GM12878 (cell line): ENCODE measurements at regions of chr2 and their contacts with region 1.

Region 1: DNA sequence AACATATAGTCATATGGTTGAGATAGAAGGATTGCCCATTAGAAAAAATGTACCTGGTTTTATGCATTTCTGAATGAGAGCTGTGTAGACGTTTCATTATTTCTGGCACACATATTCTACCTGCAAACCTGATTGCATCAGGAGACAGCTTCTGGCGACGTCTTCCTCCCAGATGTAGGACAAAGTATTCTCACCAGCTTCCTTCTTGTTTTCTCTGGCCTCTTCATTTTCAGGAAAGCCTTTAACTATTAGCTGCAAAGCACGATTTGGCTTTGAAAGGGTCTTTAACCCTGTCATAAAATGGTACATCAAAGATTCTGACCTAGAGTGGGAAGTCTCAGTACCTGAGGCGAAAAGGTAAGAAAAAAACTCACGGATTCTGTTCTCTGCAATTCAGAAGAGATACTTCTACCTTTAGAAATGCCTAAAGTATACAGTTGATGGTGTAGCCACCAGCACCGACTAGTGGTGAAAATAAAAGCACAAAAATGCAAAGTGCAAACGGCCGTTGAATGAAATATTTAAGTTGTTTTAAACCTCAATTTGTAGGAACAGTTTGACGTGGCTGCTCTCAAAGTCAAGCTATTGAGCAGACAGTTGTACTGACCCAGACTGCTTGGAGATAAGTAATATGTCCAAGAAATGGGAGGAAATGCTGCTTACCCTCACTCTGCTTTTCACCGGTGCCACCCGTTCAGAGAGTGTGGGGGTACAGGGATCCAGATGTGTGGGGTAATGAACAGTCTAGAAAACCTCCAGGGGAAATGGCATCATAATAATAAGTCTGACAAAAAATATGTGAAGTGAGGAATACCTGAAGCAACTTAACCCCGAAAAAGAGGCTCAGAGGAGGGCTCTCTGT is 20.2 kb downstream of the IL18RAP start:
- DNase-seq: no peak
- ATAC-seq: peak; percentile 93
- H3K4me3 ChIP-seq: no peak overlapping the region
- H3K27ac ChIP-seq: no peak overlapping the region
- H3K4me1 ChIP-seq: 0 out of 2 replicates have a peak, but pooled peaks cover 3% of the 10 kb centered on the region
- H3K27me3 ChIP-seq: no peaks in the 10 kb centered on the region
- CTCF ChIP-seq: peak; percentile 70 to 88 (median 86)
- EP300 ChIP-seq: no peak
- POLR2A ChIP-seq: no peak
- RAD21 ChIP-seq: peak; percentile 96

Region 2: DNA sequence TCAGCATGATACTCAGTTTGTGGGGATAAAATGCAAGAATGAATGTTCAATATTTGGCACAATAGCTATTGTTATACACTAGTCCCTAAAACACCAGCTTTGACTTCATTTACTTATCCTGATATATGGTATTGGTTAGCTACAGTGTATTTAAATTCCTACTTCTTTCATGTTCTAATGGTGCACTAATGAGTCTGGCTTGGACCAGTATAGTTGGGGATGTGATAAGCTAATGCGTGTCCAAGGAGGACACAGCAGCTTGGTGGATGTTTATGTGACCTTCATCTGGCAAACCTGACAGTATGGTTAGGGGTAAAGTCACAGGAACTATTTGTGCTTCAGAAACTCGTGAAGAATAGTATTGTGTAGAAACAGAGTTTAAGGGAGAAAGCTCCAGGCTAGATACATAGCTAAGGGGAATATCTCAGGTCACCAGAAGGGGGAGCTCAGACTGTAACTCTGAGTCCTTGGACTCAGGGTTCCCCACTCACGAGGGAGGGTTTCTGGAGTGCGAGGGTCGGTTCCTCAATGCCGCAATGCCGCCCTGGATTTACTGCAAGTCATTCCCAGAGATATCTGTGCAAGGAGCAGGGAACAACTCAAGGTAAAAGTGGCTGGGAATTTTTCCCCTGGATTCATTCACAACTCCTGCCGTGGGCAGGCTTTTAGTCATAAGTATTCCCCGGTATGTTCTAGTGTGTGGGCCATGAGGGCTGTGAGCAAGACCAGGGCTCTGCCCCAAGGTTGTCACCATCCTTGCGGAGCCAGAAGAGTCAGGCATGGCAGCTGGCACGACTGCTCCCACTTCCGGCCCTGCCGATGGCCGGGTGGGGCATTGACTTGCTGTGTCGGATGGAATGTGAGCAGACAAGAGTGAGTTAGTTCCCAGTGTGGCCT is 437.0 kb before region 1 on chr2:
- CTCF ChIA-PET with region 1: interaction called, 5 read pairs
- POLR2A ChIA-PET with region 1: no interaction called
- RAD21 ChIA-PET with region 1: interaction called, 10 read pairs
- SMC1A ChIA-PET with region 1: interaction called, 13 read pairs
- in situ Hi-C with region 1: no loop called
- intact Hi-C with region 1: loop called (anchors 5 kb)
- DNase-seq: no peak
- ATAC-seq: peak; percentile 82
- H3K4me3 ChIP-seq: no peak overlapping the region
- H3K27ac ChIP-seq: no peak overlapping the region
- H3K4me1 ChIP-seq: peaks cover 3% of the 10 kb centered on the region; the same call in 1 of the 2 replicates
- H3K27me3 ChIP-seq: no peaks in the 10 kb centered on the region; a peak in 1 of 4 replicates
- CTCF ChIP-seq: peak; percentile 63 to 73 (median 69)
- EP300 ChIP-seq: no peak
- POLR2A ChIP-seq: no peak
- RAD21 ChIP-seq: peak; percentile 51

Region 3: DNA sequence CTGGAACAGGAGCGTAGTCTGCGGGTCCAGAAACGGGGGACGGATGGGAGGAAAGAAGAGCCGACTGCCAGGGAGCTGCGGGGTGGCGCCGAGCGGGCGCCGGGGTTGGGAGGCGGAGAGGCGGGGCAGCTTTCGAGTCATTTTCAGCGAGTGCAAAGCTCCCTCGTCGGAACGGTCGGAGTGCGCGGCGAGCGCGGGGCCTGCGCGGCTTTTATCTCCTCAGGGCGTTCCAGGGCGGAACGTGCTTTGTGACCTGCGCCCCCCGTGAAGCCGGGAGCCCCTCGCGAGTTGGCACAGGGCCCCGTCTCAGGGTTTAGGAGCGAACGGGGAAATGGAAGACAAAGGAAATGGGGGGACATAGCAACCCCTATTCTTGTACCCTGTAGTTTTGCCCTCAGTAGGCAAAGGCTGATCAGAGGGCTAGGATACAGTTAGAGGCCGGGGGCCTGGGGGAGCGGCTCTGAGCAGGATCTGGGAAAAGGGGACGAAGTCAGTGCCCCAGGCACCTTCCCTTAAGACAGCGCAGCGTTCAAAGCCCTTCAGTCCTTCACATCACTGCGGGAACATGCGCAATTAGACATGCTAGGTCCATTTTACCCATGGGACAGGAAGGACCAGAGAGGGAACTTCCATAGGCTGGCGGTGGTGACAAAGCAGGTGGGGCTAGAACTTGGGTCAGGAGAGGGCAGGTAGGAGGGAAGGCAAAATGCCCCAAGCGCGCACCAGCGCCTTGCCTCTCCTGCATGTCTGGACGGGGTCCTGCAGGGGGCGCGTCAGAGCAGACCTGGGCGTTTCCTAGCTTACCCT is 192.0 kb before region 1 on chr2:
- CTCF ChIA-PET with region 1: interaction called, 83 read pairs
- POLR2A ChIA-PET with region 1: no interaction called
- RAD21 ChIA-PET with region 1: interaction called, 5 read pairs
- SMC1A ChIA-PET with region 1: interaction called, 17 read pairs
- in situ Hi-C with region 1: loop called (anchors 5 kb)
- intact Hi-C with region 1: no loop called
- DNase-seq: no peak
- ATAC-seq: peak; percentile 80
- H3K4me3 ChIP-seq: no peak overlapping the region
- H3K27ac ChIP-seq: no peak overlapping the region
- H3K4me1 ChIP-seq: no peaks in the 10 kb centered on the region
- H3K27me3 ChIP-seq: no peaks in the 10 kb centered on the region; a peak in 1 of 4 replicates
- CTCF ChIP-seq: peak; percentile 58 to 63 (median 60)
- EP300 ChIP-seq: no peak
- POLR2A ChIP-seq: no peak
- RAD21 ChIP-seq: 0 out of 2 replicates have a peak, but pooled peaks have one; percentile 25

Region 4: GRCh38 chr2:102355526-102356380 is 87.4 kb before region 1 on chr2 and contains the start of gene IL18R1:
- CTCF ChIA-PET with region 1: interaction called, 58 read pairs
- POLR2A ChIA-PET with region 1: interaction called, 3 read pairs
- RAD21 ChIA-PET with region 1: interaction called, 7 read pairs
- SMC1A ChIA-PET with region 1: interaction called, 42 read pairs
- in situ Hi-C with region 1: no loop called
- intact Hi-C with region 1: loop called (anchors 2 kb)
- DNase-seq: peak; percentile 42
- ATAC-seq: peak; percentile 88
- H3K4me3 ChIP-seq: peak within 1 kb of the TSS; percentile 96
- H3K27ac ChIP-seq: peak within 1 kb of the TSS; percentile 91
- H3K4me1 ChIP-seq: peaks cover 4% of the 10 kb centered on the region
- H3K27me3 ChIP-seq: no peaks in the 10 kb centered on the region
- CTCF ChIP-seq: peak; percentile 72 to 91 (median 82)
- EP300 ChIP-seq: no peak
- POLR2A ChIP-seq: no peak
- RAD21 ChIP-seq: peak; percentile 76
- polyA plus RNA-seq, gene IL18R1: 3.5 to 3.8 TPM

Region 5: GRCh38 chr2:102424754-102425153 is 18.4 kb before region 1 on chr2:
- CTCF ChIA-PET with region 1: interaction called, 20 read pairs
- POLR2A ChIA-PET with region 1: no interaction called
- RAD21 ChIA-PET with region 1: interaction called, 4 read pairs
- SMC1A ChIA-PET with region 1: interaction called, 24 read pairs
- in situ Hi-C with region 1: no loop called
- intact Hi-C with region 1: no loop called
- DNase-seq: peak; percentile 61
- ATAC-seq: peak; percentile 91
- H3K4me3 ChIP-seq: no peak overlapping the region
- H3K27ac ChIP-seq: peak overlapping the region; percentile 62; the same call in 1 of the 2 replicates
- H3K4me1 ChIP-seq: peaks cover 32% of the 10 kb centered on the region
- H3K27me3 ChIP-seq: no peaks in the 10 kb centered on the region
- CTCF ChIP-seq: no peak
- EP300 ChIP-seq: peak in 1 of 2 experiments; percentile 75; a peak in 1 of 4 replicates
- POLR2A ChIP-seq: no peak
- RAD21 ChIP-seq: no peak

Region 6: GRCh38 chr2:102487761-102488466 is 44.7 kb after region 1 on chr2:
- CTCF ChIA-PET with region 1: no interaction called
- POLR2A ChIA-PET with region 1: no interaction called
- RAD21 ChIA-PET with region 1: no interaction called
- SMC1A ChIA-PET with region 1: no interaction called
- in situ Hi-C with region 1: no loop called
- intact Hi-C with region 1: no loop called
- DNase-seq: no peak
- ATAC-seq: no peak
- H3K4me3 ChIP-seq: no peak overlapping the region
- H3K27ac ChIP-seq: no peak overlapping the region
- H3K4me1 ChIP-seq: no peaks in the 10 kb centered on the region
- H3K27me3 ChIP-seq: no peaks in the 10 kb centered on the region; a peak in 2 of 4 replicates
- CTCF ChIP-seq: no peak
- EP300 ChIP-seq: no peak
- POLR2A ChIP-seq: no peak
- RAD21 ChIP-seq: no peak